ENCODE measurements at regions of chr11 and their contacts with region 1.

Region 1: GRCh38 chr11:63614136-63614664 is at the start of gene PLAAT3:
- DNase-seq: peak; percentile 54 to 85
- H3K4me3 ChIP-seq: peak within 1 kb of the TSS; percentile 52
- H3K4me1 ChIP-seq: peaks cover 33% of the 10 kb centered on the region
- H3K27me3 ChIP-seq: no peaks in the 10 kb centered on the region

Region 2: GRCh38 chr11:63534895-63535461 is 79.2 kb before region 1 on chr11:
- in situ Hi-C with region 1: loop called (anchors 5 kb)
- DNase-seq: no peak
- H3K4me3 ChIP-seq: no peak overlapping the region
- H3K4me1 ChIP-seq: peaks cover 43% of the 10 kb centered on the region
- H3K27me3 ChIP-seq: no peaks in the 10 kb centered on the region

Region 3: GRCh38 chr11:63567044-63567840 is 47.0 kb before region 1 on chr11:
- in situ Hi-C with region 1: no loop called
- DNase-seq: peak; percentile 31 to 55
- H3K4me3 ChIP-seq: no peak overlapping the region
- H3K4me1 ChIP-seq: peaks cover 23% of the 10 kb centered on the region
- H3K27me3 ChIP-seq: no peaks in the 10 kb centered on the region

Measured in HAP-1 (cell line).